Breast epithelium (tissue), 4 donors: ENCODE measurements at regions of chr2 and their contacts with region 1.

Region 1: GRCh38 chr2:39202639-39203369 is 41.0 kb downstream of the CDKL4 start:
- DNase-seq: no peak
- H3K4me3 ChIP-seq: no peak overlapping the region
- H3K27ac ChIP-seq: no peak overlapping the region
- H3K4me1 ChIP-seq: no peaks in the 10 kb centered on the region
- H3K27me3 ChIP-seq: no peaks in the 10 kb centered on the region
- CTCF ChIP-seq: no peak
- POLR2A ChIP-seq: no peak

Region 2: DNA sequence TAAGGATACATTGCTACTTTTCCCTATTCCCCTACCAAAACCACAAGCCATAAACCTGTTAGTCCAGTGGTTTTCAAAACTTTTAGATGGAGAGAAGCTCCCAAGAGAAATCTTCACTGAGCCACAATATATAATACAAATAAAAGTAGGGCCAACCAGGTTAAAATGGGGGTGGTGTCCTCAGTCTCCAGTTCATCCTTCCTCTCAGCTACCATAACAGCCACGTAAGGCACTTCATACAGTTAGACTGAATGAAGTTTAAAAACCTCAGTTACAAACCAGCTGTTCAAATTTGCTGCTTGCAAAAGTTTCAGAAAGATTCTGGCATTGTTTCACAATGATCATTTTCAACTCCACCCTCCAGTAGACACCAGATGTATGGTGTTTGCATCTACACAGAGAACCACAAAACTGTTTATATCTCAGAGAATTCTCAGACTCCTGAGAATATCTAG is 107.9 kb before region 1 on chr2:
- intact Hi-C with region 1: no loop called
- DNase-seq: no peak
- H3K4me3 ChIP-seq: no peak overlapping the region
- H3K27ac ChIP-seq: peak overlapping the region in 1 of 2 donors; percentile 22
- H3K4me1 ChIP-seq: peaks cover 0 to 5% of the 10 kb centered on the region in 2 donors
- H3K27me3 ChIP-seq: no peaks in the 10 kb centered on the region
- CTCF ChIP-seq: no peak
- POLR2A ChIP-seq: no peak

Region 3: DNA sequence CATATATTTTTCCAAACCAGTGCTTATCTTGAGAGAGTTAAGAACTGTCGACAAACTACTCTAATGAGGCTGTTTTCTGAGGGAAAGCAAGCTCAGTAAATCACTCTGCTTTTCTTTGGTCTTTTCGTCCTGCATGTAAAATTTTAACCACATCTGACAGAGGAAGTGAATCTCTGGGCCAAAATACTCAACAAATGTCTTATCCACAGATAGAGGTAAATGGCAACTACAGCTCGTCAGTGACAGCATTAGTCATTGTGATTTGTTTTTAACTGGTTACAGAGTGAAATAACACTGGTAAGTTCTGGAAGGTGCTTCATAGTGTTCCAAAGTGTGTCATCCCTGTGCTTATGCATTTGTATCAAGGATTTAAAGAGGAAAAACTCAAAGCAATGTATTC is 1331.7 kb after region 1 on chr2:
- intact Hi-C with region 1: loop called (anchors 10 kb)
- DNase-seq: no peak
- H3K4me3 ChIP-seq: no peak overlapping the region
- H3K27ac ChIP-seq: no peak overlapping the region
- H3K4me1 ChIP-seq: no peaks in the 10 kb centered on the region
- H3K27me3 ChIP-seq: no peaks in the 10 kb centered on the region
- CTCF ChIP-seq: no peak
- POLR2A ChIP-seq: no peak